ENCODE measurements at regions of chr22 and their contacts with region 1.

Region 1: GRCh38 chr22:29394931-29395581 is 6.7 kb upstream of the AP1B1 start:
- DNase-seq: peak in 1 of 2 experiments; percentile 45
- H3K4me3 ChIP-seq: no peak overlapping the region
- H3K27ac ChIP-seq: no peak overlapping the region
- H3K4me1 ChIP-seq: 0 out of 2 replicates have a peak, but pooled peaks cover 4% of the 10 kb centered on the region
- H3K27me3 ChIP-seq: no peaks in the 10 kb centered on the region
- CTCF ChIP-seq: peak; percentile 89

Region 2: DNA sequence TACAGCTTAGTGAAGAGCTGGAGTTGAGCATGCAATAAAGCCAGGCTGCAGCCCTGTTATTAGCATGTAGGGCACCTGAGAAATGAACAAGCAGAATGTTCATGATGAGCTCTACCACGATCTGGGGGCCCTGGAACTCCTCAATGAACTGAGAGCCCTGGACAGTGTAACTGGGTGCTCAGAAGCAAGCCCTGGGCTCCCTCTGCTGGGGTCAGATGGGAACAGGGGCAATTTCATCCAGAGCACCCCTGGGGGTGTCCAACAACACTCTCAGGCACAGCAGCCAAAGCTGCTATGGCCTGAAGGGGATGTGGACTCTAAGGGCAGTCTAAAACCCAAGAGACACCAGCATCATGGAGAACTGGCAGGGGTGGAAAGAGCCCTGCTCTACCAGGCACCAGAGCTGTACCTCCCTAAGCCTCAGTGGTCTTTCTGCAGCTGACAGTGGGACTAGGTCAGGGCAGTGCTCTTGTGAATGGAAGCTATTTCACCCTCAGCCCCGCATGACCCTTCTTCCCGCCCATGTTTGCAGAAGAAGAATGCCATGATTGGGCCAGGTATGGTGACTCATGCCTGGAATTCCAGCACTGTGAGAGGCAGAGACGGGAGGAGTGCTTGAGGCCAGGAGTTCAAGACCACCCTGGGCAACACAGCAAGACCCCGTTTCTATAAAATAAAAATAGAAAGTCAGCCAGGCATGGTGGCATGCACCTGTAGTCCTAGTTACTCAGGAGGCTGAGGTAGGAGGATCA is 129.6 kb after region 1 on chr22:
- CTCF ChIA-PET with region 1: no interaction called
- POLR2A ChIA-PET with region 1: no interaction called
- intact Hi-C with region 1: loop called (anchors 1 kb)
- DNase-seq: peak in 1 of 2 experiments; percentile 8
- H3K4me3 ChIP-seq: no peak overlapping the region
- H3K27ac ChIP-seq: no peak overlapping the region
- H3K4me1 ChIP-seq: no peaks in the 10 kb centered on the region
- H3K27me3 ChIP-seq: no peaks in the 10 kb centered on the region
- CTCF ChIP-seq: peak; percentile 60

Region 3: DNA sequence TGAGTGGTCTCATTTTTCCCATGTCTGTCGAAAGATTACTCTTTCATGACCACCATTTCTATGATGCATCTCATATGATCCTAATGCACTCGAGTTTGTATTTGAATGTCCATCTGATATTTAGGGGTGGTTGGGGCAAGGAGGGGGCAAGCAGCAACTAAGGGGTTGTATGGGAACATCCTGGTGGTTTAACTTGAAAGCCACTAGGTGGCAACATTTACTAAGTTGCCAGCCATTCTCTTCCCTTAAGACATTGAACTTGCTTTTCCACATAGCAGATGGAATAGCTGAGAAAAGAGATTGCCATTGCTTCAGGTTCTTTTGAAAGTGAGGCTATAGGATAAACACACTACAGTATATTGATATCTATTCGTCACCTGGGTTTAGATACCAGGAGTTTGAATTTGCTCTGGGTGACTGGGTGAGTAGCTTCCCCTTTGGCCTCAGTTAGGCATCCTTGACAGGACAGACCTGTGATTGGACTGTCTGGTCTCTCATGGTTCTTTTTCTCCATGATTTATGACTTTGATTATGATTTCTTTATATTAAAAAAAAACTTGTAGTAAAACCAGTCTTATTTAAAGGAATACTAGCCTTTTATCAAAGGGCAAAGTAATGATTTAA is 240.8 kb after region 1 on chr22:
- CTCF ChIA-PET with region 1: no interaction called
- POLR2A ChIA-PET with region 1: no interaction called
- intact Hi-C with region 1: loop called (anchors 5 kb)
- DNase-seq: peak in 1 of 2 experiments; percentile 71
- H3K4me3 ChIP-seq: no peak overlapping the region
- H3K27ac ChIP-seq: no peak overlapping the region
- H3K4me1 ChIP-seq: 0 out of 2 replicates have a peak, but pooled peaks cover 4% of the 10 kb centered on the region
- H3K27me3 ChIP-seq: no peaks in the 10 kb centered on the region
- CTCF ChIP-seq: peak; percentile 83

Region 4: GRCh38 chr22:30005213-30005857 is 610.3 kb after region 1 on chr22:
- CTCF ChIA-PET with region 1: no interaction called
- POLR2A ChIA-PET with region 1: no interaction called
- intact Hi-C with region 1: loop called (anchors 2 kb)
- DNase-seq: peak; percentile 49 to 66
- H3K4me3 ChIP-seq: no peak overlapping the region
- H3K27ac ChIP-seq: no peak overlapping the region
- H3K4me1 ChIP-seq: no peaks in the 10 kb centered on the region
- H3K27me3 ChIP-seq: no peaks in the 10 kb centered on the region
- CTCF ChIP-seq: peak; percentile 98